ENCODE measurements at regions of chr1 and their contacts with region 1.

Region 1: DNA sequence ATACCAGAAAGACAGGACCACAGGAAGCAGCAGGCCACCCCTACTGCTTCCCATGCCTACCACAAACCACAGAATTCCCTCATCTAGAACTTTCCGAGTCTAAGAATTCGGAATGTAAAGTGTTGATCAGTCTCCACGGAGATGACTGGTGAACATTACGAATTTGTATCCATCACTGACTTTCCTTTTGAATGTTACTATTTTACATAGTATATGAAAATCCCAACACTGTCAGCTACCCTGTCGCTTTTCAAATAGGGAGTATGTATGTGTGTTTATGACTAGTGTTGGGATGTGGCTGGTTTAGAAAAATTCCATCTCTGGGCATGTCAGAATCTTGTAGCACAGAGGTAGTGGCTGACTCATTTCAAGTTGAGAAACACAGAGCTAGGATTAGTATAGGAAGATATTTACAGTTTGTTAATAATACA is 118.2 kb downstream of the COQ8A start:
- DNase-seq: no peak
- H3K4me3 ChIP-seq: no peak overlapping the region
- H3K4me3 Mint-ChIP-seq: no peak overlapping the region
- H3K27ac Mint-ChIP-seq: no peak overlapping the region
- H3K4me1 ChIP-seq: no peaks in the 10 kb centered on the region
- H3K4me1 Mint-ChIP-seq: no peaks in the 10 kb centered on the region
- H3K27me3 ChIP-seq: no peaks in the 10 kb centered on the region
- H3K27me3 Mint-ChIP-seq: no peaks in the 10 kb centered on the region
- CTCF ChIP-seq: no peak

Region 2: GRCh38 chr1:227043755-227044154 is 14.6 kb before region 1 on chr1:
- CTCF ChIA-PET with region 1: no interaction called
- POLR2A ChIA-PET with region 1: interaction called, 12 read pairs
- intact Hi-C with region 1: no loop called
- DNase-seq: no peak
- H3K4me3 ChIP-seq: no peak overlapping the region
- H3K4me3 Mint-ChIP-seq: no peak overlapping the region
- H3K27ac Mint-ChIP-seq: no peak overlapping the region
- H3K4me1 ChIP-seq: no peaks in the 10 kb centered on the region
- H3K4me1 Mint-ChIP-seq: no peaks in the 10 kb centered on the region
- H3K27me3 ChIP-seq: no peaks in the 10 kb centered on the region
- H3K27me3 Mint-ChIP-seq: no peaks in the 10 kb centered on the region
- CTCF ChIP-seq: no peak

Region 3: DNA sequence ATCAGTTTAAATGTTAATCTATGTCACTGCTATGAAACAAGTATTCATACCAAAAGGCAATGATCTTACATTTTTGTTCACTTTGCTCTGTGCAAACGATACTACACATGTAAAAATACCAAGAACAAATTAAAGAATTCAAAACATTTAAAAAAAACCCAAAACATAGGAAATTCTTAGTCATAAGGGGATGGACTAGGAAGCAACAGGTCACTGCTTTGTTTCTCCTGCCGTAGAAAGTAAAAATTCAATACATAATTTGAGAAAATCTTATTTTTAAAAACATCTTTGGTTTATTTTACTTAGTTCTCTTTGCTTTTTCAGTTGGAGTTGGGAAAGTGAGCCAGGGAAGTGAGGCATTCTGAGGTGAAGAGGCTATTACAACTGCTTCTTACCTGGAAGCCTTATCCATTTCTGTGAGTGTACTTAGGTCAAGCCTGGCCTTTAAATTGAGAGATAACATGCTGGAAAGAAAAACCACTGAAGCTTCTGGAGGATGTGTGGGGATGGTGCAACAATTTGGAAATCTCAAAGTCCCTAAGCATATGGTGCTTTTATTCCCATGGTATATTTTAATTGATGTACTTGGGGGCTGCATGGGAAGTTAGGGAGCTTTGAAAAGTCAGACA is 76.5 kb after region 1 on chr1:
- CTCF ChIA-PET with region 1: no interaction called
- POLR2A ChIA-PET with region 1: no interaction called
- intact Hi-C with region 1: no loop called
- DNase-seq: no peak
- H3K4me3 ChIP-seq: no peak overlapping the region
- H3K4me3 Mint-ChIP-seq: peak overlapping the region; percentile 28
- H3K27ac Mint-ChIP-seq: peak overlapping the region; percentile 48
- H3K4me1 ChIP-seq: peaks cover 52% of the 10 kb centered on the region
- H3K4me1 Mint-ChIP-seq: peaks cover 41% of the 10 kb centered on the region
- H3K27me3 ChIP-seq: no peaks in the 10 kb centered on the region
- H3K27me3 Mint-ChIP-seq: no peaks in the 10 kb centered on the region
- CTCF ChIP-seq: no peak

Measured in Caco-2 (cell line).